Activated B cell treated with CpG ODN at 0.5 μM for 24 hours (primary cell): ENCODE measurements at regions of chr2 and their contacts with region 1.

Region 1: GRCh38 chr2:190382851-190383250 is 25.3 kb upstream of the MFSD6 start:
- DNase-seq: no peak
- ATAC-seq: peak; percentile 61
- H3K4me3 Mint-ChIP-seq: no peak overlapping the region
- H3K27ac Mint-ChIP-seq: no peak overlapping the region
- H3K4me1 Mint-ChIP-seq: peaks cover 2% of the 10 kb centered on the region
- H3K27me3 Mint-ChIP-seq: no peaks in the 10 kb centered on the region
- CTCF ChIP-seq: no peak

Region 2: GRCh38 chr2:190365499-190366204 is 17.2 kb before region 1 on chr2:
- CTCF ChIA-PET with region 1: no interaction called
- POLR2A ChIA-PET with region 1: no interaction called
- intact Hi-C with region 1: no loop called
- DNase-seq: no peak
- ATAC-seq: no peak
- H3K4me3 Mint-ChIP-seq: no peak overlapping the region
- H3K27ac Mint-ChIP-seq: no peak overlapping the region
- H3K4me1 Mint-ChIP-seq: peaks cover 10% of the 10 kb centered on the region
- H3K27me3 Mint-ChIP-seq: no peaks in the 10 kb centered on the region
- CTCF ChIP-seq: no peak

Region 3: DNA sequence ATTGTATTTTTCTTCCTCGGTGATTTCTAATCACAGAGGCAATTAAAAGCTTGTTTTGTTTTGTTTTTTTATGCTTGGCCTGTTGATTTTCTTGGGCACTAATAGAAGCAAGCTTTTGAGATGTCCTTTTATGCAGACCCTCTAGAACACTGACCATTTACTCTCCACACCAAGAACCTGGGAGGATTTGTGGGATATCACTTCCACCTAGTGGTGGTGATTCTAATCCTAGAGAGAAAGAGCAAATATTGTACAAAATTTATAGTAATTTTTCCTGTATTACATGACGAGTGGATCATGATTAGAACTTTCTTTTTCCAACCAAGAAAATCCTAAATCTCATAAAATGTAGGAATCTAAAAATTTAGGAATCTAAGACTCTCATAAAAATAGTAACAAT is 128.3 kb after region 1 on chr2:
- CTCF ChIA-PET with region 1: no interaction called
- POLR2A ChIA-PET with region 1: no interaction called
- intact Hi-C with region 1: loop called (anchors 2 kb)
- DNase-seq: no peak
- ATAC-seq: no peak
- H3K4me3 Mint-ChIP-seq: no peak overlapping the region
- H3K27ac Mint-ChIP-seq: no peak overlapping the region
- H3K4me1 Mint-ChIP-seq: peaks cover 19% of the 10 kb centered on the region
- H3K27me3 Mint-ChIP-seq: no peaks in the 10 kb centered on the region
- CTCF ChIP-seq: no peak

Region 4: GRCh38 chr2:190648289-190649034 is 265.6 kb after region 1 on chr2:
- CTCF ChIA-PET with region 1: no interaction called
- POLR2A ChIA-PET with region 1: no interaction called
- intact Hi-C with region 1: no loop called
- DNase-seq: peak; percentile 91
- ATAC-seq: peak; percentile 77
- H3K4me3 Mint-ChIP-seq: peak overlapping the region; percentile 83
- H3K27ac Mint-ChIP-seq: peak overlapping the region; percentile 79
- H3K4me1 Mint-ChIP-seq: peaks cover 22% of the 10 kb centered on the region
- H3K27me3 Mint-ChIP-seq: no peaks in the 10 kb centered on the region
- CTCF ChIP-seq: no peak

Region 5: DNA sequence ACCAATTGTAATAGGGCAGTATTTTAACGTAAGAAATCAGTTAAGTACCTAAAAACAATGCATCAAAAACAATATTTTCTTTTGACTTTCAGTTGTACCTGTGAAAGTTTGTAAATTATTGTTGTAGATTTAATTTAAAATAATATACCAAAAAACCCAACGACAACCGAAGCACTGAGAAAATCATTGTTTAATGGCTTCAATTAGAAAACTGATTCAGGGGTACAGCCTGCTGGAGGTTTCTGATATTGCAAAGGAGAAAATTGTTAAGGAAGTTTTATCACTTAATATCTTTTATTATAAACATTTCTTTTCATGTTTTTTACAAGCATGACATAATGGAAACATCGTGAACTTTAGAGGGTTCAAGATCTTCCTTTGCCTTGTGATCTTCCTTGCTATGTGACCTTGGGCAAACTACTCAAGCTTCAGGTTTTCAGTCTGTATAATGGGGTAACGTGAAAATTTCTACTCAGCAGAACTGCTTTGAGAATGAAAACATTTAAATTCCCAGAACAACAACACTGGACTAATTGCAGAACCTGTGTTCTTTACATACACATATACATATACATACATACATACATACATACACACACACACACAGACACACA is 421.4 kb after region 1 on chr2:
- CTCF ChIA-PET with region 1: no interaction called
- POLR2A ChIA-PET with region 1: no interaction called
- intact Hi-C with region 1: loop called (anchors 1 kb)
- DNase-seq: no peak
- ATAC-seq: no peak
- H3K4me3 Mint-ChIP-seq: no peak overlapping the region
- H3K27ac Mint-ChIP-seq: no peak overlapping the region
- H3K4me1 Mint-ChIP-seq: peaks cover 9% of the 10 kb centered on the region
- H3K27me3 Mint-ChIP-seq: no peaks in the 10 kb centered on the region
- CTCF ChIP-seq: no peak